ENCODE measurements at regions of chr1 and their contacts with region 1.

Region 1: DNA sequence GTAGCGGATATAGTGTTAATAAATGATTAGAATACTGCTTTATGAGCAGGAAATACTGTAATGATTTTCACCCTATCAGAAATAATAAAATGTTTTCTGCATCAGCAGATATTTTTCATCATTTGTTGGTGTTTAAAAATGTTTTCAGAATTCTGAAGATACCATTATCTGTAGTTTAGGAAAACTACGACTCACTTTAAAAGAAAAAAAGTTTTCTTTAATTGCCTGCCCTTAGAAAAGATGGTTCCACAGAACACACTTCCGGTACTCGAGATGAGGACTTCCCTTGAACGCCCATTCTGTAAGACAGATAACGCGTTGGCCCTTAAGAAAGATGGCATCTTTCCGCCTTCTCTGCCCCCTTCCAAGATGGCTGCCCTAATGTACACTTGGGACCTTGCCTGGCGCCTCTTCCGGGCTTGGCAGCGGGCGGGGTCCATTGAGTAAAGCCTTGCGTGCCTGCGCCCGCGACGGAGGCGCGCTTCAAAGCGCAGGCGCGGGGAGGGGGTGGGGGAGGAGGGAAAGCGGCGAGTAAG is at the start of gene SZRD1:
- DNase-seq: peak; percentile 97
- H3K4me3 Mint-ChIP-seq: peak within 1 kb of the TSS; percentile 93
- H3K27ac Mint-ChIP-seq: peak within 1 kb of the TSS; percentile 98
- H3K4me1 Mint-ChIP-seq: peaks cover 35% of the 10 kb centered on the region
- H3K27me3 Mint-ChIP-seq: no peaks in the 10 kb centered on the region
- total RNA-seq, gene SZRD1: 169 to 179 TPM

Region 2: DNA sequence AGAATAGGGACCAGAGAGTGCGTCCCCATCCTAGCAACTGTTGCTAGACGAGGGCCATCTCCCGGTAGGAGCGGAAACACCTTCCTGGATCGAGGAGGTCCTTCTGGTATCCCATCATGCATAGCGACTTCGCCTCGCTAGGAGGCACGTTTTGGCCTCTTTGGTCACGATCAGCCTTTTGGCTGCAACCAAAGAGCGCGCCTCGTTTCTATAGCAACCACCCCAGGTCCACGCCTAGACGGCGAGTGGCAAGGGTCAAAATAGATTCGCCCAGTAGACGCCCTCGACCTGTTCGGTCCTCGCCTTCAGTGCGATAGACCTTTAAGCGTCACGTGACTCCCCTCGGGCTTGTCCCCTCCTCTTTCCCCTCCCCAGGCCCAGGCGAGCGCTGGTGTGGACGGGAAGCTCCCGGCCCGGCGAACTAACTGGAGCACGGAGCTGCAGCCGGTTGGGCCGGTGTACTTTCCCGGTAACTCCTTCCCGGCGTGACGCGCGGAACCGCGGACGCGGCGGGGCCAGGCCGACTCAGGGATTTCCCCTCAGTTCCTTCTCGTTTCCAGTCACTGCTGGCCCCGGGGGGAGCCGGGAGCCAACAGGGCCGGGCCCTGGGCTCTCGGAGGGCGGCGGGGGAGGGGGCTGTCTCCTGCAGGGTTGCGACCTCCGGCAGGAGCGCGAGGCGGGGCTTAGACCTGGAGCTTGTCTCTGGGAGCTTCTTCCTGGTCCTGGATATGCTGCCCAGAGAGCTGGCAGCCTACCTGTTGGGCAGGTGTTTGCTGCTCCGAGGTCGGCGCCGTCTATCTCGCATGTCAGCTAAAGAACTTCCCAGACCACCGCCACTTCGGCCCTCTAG is 840.1 kb before region 1 on chr1 and contains the start of gene DNAJC16:
- CTCF ChIA-PET with region 1: no interaction called
- intact Hi-C with region 1: loop called (anchors 1 kb)
- DNase-seq: peak; percentile 99
- H3K4me3 Mint-ChIP-seq: peak within 1 kb of the TSS; percentile 95
- H3K27ac Mint-ChIP-seq: peak within 1 kb of the TSS; percentile 99
- H3K4me1 Mint-ChIP-seq: peaks cover 51% of the 10 kb centered on the region
- H3K27me3 Mint-ChIP-seq: no peaks in the 10 kb centered on the region
- total RNA-seq, gene DNAJC16: 7.1 to 9.8 TPM

Region 3: GRCh38 chr1:15966081-15966955 is 400.5 kb before region 1 on chr1:
- CTCF ChIA-PET with region 1: no interaction called
- intact Hi-C with region 1: loop called (anchors 2 kb)
- DNase-seq: peak; percentile 94
- H3K4me3 Mint-ChIP-seq: peak overlapping the region; percentile 68
- H3K27ac Mint-ChIP-seq: peak overlapping the region; percentile 97
- H3K4me1 Mint-ChIP-seq: peaks cover 80% of the 10 kb centered on the region
- H3K27me3 Mint-ChIP-seq: no peaks in the 10 kb centered on the region

Region 4: DNA sequence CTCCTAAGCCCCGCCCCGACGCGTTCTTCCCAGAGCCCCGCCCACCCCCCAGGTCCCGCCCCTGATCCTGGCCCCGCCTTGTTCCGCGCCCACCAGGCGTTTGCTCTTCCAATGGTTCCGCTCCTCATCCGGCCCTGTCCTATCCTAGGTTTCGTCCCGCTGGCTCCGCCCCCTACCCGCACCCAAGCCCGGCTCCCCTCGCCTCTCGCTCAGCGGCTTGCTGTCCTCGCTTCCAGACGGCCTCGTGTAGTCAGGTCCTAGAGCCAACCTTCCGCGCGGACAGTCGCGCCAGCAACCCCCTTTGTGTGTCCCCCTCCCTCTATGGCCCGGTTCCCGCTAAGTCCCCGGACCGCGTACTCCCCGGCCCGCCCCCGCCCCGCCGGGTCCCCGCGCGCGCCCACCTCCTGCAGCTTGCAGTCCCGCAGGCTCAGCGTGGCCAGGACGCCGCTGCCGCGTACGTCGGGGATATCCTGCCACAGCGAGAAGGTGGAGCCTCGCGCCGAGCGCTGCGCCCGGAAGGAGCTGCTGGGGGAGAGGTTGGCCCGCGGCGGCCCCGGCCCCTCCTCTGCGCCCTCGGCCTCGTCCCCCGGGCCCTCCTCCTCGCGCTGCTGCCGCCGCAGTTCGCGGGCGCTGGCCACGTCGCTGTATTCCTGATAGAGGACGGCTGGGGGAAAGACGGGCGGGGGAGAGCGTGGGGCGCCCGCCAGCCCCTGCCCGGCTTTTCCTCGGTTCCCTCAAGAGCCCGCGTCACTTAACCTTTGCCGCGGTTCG is 160.1 kb before region 1 on chr1:
- CTCF ChIA-PET with region 1: interaction called, 5 read pairs
- intact Hi-C with region 1: loop called (anchors 1 kb)
- DNase-seq: peak; percentile 95
- H3K4me3 Mint-ChIP-seq: peak overlapping the region; percentile 83
- H3K27ac Mint-ChIP-seq: peak overlapping the region; percentile 87
- H3K4me1 Mint-ChIP-seq: peaks cover 4% of the 10 kb centered on the region
- H3K27me3 Mint-ChIP-seq: no peaks in the 10 kb centered on the region

Region 5: DNA sequence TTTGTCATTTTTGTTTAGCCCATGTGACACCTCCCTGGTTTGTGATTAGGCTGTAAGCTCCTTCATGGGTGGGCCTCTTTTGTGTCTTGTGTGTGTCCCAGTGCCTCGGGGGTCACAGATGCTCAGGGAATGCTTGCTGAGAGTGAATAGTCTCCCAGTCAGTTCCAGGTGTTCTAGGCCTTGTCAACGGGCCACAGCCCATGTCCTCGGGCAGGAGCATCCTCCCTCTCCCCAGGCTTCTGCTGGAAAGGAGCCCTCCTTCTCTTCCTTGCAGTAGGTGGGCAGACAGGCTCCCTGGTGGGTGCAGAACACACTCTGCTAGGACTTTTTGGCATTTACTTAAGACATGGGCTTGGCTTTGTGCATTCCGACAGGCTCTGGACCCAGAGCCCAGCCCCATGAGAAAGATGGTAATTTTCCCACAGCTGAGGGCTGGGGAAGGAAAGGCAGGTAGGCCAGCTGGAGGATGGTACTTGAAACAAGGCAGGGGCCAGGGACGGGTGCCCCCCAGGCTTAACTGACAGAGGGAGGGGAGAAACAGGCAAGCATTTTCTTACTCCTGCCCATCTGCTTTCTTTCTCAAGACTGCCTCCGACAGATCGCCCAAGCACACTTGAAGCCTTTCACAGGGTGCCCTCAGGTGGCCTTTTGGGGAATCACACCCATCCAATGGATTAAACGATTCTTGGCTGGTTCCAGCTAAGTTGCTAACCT is 122.7 kb before region 1 on chr1:
- CTCF ChIA-PET with region 1: interaction called, 19 read pairs
- intact Hi-C with region 1: loop called (anchors 2 kb)
- DNase-seq: peak; percentile 91
- H3K4me3 Mint-ChIP-seq: no peak overlapping the region
- H3K27ac Mint-ChIP-seq: no peak overlapping the region
- H3K4me1 Mint-ChIP-seq: peaks cover 10% of the 10 kb centered on the region
- H3K27me3 Mint-ChIP-seq: no peaks in the 10 kb centered on the region

Region 6: DNA sequence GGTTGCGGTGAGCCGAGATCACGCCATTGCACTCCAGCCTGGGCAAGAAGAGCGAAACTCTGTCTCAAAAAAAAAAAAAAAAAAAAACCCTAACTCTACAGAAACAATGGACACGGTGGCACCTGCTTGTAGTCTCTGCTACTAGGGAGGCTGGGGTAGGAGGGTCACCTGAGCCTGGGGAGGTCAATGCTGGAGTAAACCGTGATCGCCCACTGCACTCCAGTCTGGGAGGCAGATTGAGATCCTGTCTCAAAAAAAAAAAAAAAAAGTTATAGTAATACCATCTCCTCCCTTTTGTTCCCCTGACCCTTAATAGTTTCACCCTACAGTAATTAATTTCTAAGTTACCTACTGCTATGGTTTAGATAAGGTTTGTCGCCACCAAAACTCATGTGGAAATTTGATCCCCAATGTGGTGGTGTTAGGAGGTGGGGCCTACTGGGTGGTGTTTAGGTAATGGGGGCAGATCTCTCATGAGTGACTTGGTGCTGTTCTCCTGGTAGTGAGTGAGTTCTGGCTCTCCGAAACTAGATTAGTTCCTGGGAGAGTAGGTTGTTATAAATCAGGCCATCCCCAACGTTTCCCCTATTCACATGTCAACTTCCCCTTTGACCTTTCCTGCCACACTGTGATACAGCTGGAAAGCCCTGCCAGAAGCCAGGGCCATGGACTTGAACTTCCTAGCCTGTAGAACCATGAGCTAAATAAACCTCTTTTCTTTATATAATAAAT is 24.3 kb before region 1 on chr1:
- CTCF ChIA-PET with region 1: no interaction called
- intact Hi-C with region 1: no loop called
- DNase-seq: no peak
- H3K4me3 Mint-ChIP-seq: no peak overlapping the region
- H3K27ac Mint-ChIP-seq: no peak overlapping the region
- H3K4me1 Mint-ChIP-seq: peaks cover 14% of the 10 kb centered on the region
- H3K27me3 Mint-ChIP-seq: no peaks in the 10 kb centered on the region

Region 7: DNA sequence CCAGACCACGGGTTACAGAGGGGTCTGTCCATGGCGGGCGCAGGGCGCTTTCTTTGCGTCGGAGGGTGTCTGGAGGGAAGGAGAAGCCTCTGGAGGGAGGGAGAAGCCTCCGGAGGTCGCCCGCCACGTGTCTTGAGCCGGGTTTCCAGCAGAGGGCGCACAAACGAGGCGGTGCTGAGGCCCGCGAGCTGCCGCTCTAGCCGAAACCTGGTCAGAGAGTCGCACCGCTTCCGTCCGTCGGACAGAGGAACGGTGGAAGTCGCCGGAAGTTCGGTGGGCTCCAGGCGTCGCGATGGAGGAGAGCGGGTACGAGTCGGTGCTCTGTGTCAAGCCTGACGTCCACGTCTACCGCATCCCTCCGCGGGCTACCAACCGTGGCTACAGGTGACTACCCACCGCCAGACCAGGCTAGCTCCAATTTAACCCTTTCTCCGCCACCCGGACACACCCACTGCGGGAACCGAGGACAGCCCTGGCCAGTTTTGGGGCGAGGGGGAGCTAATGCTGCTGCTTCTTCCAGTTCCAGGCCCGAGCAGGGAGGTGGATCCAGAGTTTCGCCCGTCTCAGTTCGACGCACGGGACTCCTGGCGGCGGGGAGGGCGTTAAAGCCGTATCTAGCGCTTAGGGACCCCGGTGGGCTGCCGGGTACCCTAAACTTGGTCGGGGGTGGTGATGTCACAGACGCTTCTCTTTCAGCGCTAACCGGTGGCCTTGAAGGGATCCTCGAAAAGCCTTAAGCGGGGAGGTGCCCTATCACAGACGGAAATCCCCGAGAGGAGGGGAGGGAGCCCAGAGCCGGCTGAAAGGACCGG is 73.9 kb after region 1 on chr1 and contains the start of gene NECAP2:
- CTCF ChIA-PET with region 1: interaction called, 8 read pairs
- intact Hi-C with region 1: loop called (anchors 1 kb)
- DNase-seq: peak; percentile 97
- H3K4me3 Mint-ChIP-seq: peak within 1 kb of the TSS; percentile 86
- H3K27ac Mint-ChIP-seq: peak within 1 kb of the TSS; percentile 90
- H3K4me1 Mint-ChIP-seq: peaks cover 36% of the 10 kb centered on the region
- H3K27me3 Mint-ChIP-seq: no peaks in the 10 kb centered on the region
- total RNA-seq, gene NECAP2: 53.3 to 53.4 TPM

Region 8: DNA sequence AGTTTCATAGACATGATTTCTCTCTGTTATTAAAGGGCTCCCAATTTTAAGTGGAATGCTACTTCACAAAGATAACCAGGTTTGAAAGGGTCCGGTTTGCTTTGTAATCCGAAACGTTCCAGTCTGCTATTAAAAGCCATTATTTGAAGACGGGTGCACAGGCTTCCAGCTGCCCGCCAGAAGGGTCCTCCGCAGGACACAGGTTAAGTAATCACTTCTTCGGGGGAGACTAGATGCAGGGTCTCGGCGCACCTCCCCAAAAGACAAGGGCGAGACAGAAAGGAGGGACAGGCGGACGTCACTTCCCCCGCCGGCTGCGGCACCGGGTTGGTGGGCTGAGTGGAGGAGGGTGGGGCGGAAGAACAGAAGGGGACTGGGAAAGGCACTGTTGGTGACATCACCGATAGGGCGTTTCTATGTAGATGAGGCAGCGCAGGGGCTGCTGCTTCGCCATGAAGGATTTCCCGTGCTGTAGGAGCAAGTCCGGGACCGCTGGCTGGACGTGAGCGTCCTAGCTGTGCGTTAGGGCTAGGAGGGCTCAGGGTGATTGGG is 537.8 kb after region 1 on chr1:
- CTCF ChIA-PET with region 1: no interaction called
- intact Hi-C with region 1: loop called (anchors 5 kb)
- DNase-seq: peak; percentile 100
- H3K4me3 Mint-ChIP-seq: no peak overlapping the region
- H3K27ac Mint-ChIP-seq: no peak overlapping the region
- H3K4me1 Mint-ChIP-seq: peaks cover 32% of the 10 kb centered on the region
- H3K27me3 Mint-ChIP-seq: no peaks in the 10 kb centered on the region